ENCODE measurements at regions of chr5 and their contacts with region 1.

Region 1: DNA sequence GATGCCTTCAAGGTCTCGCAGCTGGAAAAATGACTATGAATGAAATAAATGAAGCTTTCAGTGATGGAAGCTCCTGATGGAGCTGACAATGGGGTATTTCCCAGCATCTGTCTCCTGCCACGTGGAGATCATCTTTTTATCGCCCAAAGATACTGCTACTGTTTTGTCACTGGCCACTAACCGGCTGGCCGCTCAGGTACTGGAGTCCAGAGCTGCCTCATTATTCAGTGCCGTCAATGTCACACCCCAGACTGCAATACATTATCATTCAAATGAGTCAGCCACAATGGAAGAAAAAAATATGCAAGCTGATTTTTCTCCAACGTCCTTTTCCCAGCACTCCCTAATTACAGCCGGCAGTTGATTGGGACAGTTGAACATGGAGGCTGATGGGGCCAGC is 280.4 kb downstream of the ZSWIM6 start:
- H3K4me3 ChIP-seq: no peak overlapping the region
- H3K27ac ChIP-seq: no peak overlapping the region
- H3K4me1 ChIP-seq: no peaks in the 10 kb centered on the region
- CTCF ChIP-seq: no peak

Region 2: GRCh38 chr5:61623401-61624076 is 11.1 kb after region 1 on chr5:
- CTCF ChIA-PET with region 1: interaction called, 10 read pairs
- POLR2A ChIA-PET with region 1: no interaction called
- H3K4me3 ChIP-seq: no peak overlapping the region
- H3K27ac ChIP-seq: no peak overlapping the region
- H3K4me1 ChIP-seq: no peaks in the 10 kb centered on the region
- CTCF ChIP-seq: no peak